ENCODE measurements at regions of chr4 and their contacts with region 1.

Region 1: DNA sequence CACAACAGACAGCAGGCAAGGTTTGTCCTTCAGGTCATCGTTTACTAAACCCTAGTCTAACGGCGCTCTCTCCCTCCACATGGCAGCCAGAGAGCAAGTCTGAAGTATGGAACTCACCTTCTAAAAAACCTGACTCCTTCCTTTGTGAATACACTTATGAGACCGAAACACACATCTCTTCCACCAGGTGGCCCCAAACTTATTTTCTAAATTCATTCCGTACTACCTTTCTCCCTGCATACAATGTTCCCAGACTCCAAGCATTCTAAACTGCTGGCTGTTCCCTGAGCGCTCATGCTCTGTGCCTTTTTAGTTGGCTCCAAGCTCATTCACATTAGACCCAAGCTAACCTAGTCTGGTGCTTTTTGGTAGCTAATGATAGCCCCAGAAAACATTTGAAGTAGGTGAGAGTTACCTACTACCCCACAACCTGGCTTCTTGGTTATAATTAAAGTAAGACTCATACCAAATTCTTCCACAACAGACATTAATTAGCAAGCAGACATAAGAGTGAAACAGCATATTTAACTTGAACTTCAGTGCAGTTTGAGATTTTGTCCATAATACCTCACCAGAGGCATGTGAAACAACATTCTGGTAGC is 67.6 kb upstream of the DCLK2 start:
- DNase-seq: no peak
- H3K4me3 ChIP-seq: no peak overlapping the region
- H3K27ac ChIP-seq: no peak overlapping the region
- H3K4me1 ChIP-seq: peaks cover 0 to 6% (median 0%) of the 10 kb centered on the region in 6 donors
- H3K27me3 ChIP-seq: peaks cover 0 to 9% (median 0%) of the 10 kb centered on the region in 7 donors
- CTCF ChIP-seq: peak in 7 of 11 experiments; percentile 24 to 61 (median 55)
- POLR2A ChIP-seq: no peak

Region 2: DNA sequence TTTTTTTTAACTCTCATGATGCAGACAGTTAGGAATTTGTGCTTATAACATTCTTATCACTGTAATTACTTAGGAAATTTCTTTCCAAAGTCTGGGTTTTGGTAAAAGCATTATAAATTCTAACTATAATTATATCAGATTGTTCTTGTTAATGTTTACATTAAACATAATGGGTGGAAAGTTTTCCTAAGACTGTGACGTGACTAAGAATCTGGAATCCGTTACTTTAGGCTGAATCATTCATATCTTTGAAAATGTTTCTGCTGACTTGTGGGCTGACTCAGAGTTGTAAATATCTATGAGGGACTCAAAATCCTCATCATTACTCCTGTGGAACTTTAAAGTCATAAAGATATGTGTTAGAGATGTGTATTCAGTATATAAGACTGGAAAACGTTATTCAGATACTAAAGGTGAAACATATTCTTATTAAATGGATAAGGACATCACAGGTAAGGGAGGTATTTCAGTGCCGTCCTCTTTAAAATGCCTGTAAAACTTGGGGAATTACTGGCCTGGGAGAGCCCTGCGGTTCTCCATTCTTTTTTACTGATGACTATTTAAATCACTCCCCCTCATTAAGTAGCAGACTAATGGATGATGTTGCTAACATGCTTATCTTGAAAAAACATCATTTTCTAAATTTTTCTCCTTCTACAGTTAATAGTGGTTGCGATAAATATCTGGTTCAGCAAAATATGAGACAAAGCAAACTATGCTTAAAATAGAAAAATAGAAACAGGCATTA is 226.7 kb after region 1 on chr4:
- intact Hi-C with region 1: loop called (anchors 10 kb)
- DNase-seq: no peak
- H3K4me3 ChIP-seq: no peak overlapping the region
- H3K27ac ChIP-seq: no peak overlapping the region
- H3K4me1 ChIP-seq: peaks cover 0 to 4% (median 0%) of the 10 kb centered on the region in 6 donors
- H3K27me3 ChIP-seq: no peaks in the 10 kb centered on the region
- CTCF ChIP-seq: no peak
- POLR2A ChIP-seq: no peak

Measured in spleen (tissue), 13 donors.